ENCODE measurements at regions of chr5 and their contacts with region 1.

Region 1: DNA sequence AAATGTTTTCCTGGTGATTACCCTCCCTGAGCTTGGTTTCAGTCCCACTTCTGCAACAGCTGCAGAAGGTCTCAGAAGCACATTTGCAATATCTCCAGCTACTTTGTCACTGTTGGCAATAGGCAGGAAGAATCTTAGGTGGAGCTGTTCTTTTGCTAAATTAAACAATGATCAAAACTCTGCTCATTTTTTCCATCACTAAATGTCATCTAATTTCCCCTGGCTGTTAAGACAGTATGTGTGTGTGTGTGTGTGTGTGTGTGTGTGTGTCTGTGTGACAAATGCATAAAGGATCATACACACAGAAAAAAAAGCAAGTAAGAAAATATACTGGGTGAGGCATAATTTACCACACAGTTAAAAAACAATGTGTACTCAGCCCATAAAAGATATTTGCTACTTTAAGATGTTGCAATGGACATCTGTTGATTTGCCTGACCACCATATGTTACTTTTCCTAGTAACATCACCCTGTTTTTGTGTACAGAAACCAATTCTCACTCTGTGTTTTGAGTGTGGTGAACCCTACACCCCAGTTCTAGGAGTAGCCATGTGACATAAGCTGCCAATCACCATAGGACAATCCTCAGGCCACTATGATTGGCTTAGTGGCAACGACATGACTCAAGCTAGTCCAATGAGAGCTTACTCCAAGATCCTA is 572.6 kb upstream of the CLINT1 start:
- DNase-seq: no peak
- ATAC-seq: no peak
- H3K4me3 ChIP-seq: no peak overlapping the region
- H3K27ac ChIP-seq: no peak overlapping the region
- H3K4me1 ChIP-seq: peaks cover 7% of the 10 kb centered on the region; the same call in 1 of the 2 replicates
- H3K27me3 ChIP-seq: no peaks in the 10 kb centered on the region
- CTCF ChIP-seq: no peak
- EP300 ChIP-seq: no peak
- POLR2A ChIP-seq: no peak
- RAD21 ChIP-seq: no peak

Region 2: GRCh38 chr5:157956271-157956885 is 475.1 kb before region 1 on chr5:
- CTCF ChIA-PET with region 1: no interaction called
- POLR2A ChIA-PET with region 1: no interaction called
- in situ Hi-C with region 1: no loop called
- intact Hi-C with region 1: no loop called
- DNase-seq: no peak
- ATAC-seq: no peak
- H3K4me3 ChIP-seq: no peak overlapping the region
- H3K27ac ChIP-seq: no peak overlapping the region
- H3K4me1 ChIP-seq: no peaks in the 10 kb centered on the region
- H3K27me3 ChIP-seq: peaks cover 0 to 5% of the 10 kb centered on the region in 2 experiments; a peak in 1 of 5 replicates
- CTCF ChIP-seq: no peak
- EP300 ChIP-seq: no peak
- POLR2A ChIP-seq: no peak
- RAD21 ChIP-seq: no peak

Region 3: GRCh38 chr5:158383486-158383885 is 48.0 kb before region 1 on chr5:
- CTCF ChIA-PET with region 1: no interaction called
- POLR2A ChIA-PET with region 1: no interaction called
- in situ Hi-C with region 1: no loop called
- intact Hi-C with region 1: loop called (anchors 1 kb)
- DNase-seq: no peak
- ATAC-seq: no peak
- H3K4me3 ChIP-seq: no peak overlapping the region
- H3K27ac ChIP-seq: no peak overlapping the region
- H3K4me1 ChIP-seq: no peaks in the 10 kb centered on the region
- H3K27me3 ChIP-seq: no peaks in the 10 kb centered on the region
- CTCF ChIP-seq: no peak
- EP300 ChIP-seq: no peak
- POLR2A ChIP-seq: no peak
- RAD21 ChIP-seq: no peak